Gastrocnemius medialis (tissue), 4 donors: ENCODE measurements at regions of chr12 and their contacts with region 1.

Region 1: DNA sequence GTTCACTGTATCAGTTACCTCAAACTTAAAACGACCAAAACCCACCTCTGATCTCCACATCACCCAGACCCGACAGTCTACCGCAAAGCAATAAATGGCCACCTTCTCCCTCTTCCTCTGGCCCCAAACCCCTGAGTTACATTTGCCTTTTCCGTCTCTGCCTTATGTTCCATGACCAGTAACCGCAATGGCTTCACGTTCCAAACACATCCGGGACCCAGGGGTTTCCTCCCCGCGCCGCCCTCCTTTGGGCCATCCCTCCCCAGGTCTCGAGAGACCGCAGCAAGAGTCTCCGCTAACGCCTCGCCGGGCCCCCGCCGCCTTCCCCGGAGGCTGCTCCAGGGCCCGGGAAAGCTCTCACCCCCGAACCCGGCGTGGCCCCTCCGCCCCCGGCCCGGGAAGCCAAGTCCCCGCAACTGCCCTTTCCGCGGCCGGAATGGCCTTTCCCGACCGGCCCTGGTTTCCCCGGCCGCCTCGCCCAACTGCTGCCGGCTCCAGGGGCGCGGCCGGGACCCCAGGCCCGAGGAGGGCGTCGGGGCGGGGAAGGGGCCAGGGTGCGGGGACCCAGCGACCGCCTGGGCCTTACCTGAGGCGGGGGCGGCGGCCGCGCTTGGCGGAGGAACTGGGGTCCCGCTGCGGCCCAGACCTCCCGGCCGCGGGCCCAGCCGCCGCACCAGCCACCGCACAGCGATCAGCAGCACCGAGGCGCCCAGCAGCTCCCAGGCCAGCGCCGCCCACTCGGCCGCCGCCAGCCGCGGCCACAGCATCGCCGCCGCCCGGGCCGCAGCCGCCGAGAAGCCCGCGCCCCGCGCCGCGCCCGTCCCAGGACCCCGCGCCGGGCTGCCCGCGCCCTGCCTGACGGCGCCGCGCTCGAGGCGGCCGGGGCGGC is at the start of gene ANKLE2:
- DNase-seq: peak in 1 of 2 donors; percentile 28
- ATAC-seq: peak; percentile 73 to 80
- H3K4me3 ChIP-seq: peak within 1 kb of the TSS; percentile 86 to 98 (median 90)
- H3K27ac ChIP-seq: peak within 1 kb of the TSS; percentile 94 to 100 (median 99)
- H3K4me1 ChIP-seq: peaks cover 21 to 32% of the 10 kb centered on the region in 2 donors
- H3K27me3 ChIP-seq: no peaks in the 10 kb centered on the region
- CTCF ChIP-seq: no peak
- POLR2A ChIP-seq: peak in 1 of 2 donors; percentile 2
- total RNA-seq, gene ANKLE2: 29.6 to 44.9 (median 34.6) TPM

Region 2: DNA sequence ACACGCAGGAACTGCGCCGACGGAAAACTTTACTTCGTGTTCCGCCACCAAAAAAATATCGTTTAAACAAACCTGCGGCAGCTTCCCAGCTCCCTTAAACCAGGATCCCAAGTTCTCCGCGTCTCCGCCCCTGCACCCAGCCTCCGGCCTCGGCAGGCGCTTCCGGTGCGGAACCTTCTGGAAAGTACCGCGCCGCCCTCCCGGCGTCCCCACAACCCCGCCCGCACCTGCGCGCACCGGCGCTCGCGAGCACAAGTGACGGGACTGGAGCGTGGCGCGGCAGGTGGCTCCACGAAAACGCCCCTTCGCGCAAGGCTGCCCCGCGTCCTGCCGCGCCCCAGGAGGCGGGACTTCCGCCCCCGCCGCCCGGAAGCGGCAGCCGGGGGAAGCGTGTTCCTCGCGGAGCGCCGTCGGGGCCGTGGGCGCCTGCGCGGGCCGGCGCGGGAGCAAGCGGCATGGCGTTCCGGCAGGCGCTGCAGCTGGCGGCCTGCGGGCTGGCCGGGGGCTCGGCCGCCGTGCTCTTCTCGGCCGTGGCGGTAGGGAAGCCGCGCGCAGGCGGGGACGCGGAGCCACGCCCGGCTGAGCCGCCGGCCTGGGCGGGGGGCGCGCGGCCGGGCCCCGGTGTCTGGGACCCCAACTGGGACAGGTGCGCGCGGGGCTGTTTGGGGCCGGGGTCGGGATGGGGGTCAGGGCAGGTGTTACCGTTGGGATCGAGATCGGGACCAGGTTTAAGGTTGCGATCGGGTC is 50.7 kb before region 1 on chr12 and contains the start of gene PGAM5:
- in situ Hi-C with region 1: no loop called
- intact Hi-C with region 1: loop called (anchors 5 kb)
- DNase-seq: peak; percentile 68 to 85
- ATAC-seq: peak; percentile 91 to 93
- H3K4me3 ChIP-seq: peak within 1 kb of the TSS; percentile 74 to 99 (median 89)
- H3K27ac ChIP-seq: peak within 1 kb of the TSS; percentile 86 to 94 (median 90)
- H3K4me1 ChIP-seq: peaks cover 16 to 18% of the 10 kb centered on the region in 2 donors
- H3K27me3 ChIP-seq: no peaks in the 10 kb centered on the region
- CTCF ChIP-seq: peak in 1 of 5 experiments; percentile 7
- POLR2A ChIP-seq: peak; percentile 79 to 86
- total RNA-seq, gene PGAM5: 36.6 to 75.1 (median 62.8) TPM

Region 3: GRCh38 chr12:132734206-132734605 is 27.1 kb before region 1 on chr12:
- in situ Hi-C with region 1: no loop called
- intact Hi-C with region 1: no loop called
- DNase-seq: no peak
- ATAC-seq: no peak
- H3K4me3 ChIP-seq: no peak overlapping the region
- H3K27ac ChIP-seq: no peak overlapping the region
- H3K4me1 ChIP-seq: no peaks in the 10 kb centered on the region
- H3K27me3 ChIP-seq: no peaks in the 10 kb centered on the region
- CTCF ChIP-seq: no peak
- POLR2A ChIP-seq: no peak

Region 4: DNA sequence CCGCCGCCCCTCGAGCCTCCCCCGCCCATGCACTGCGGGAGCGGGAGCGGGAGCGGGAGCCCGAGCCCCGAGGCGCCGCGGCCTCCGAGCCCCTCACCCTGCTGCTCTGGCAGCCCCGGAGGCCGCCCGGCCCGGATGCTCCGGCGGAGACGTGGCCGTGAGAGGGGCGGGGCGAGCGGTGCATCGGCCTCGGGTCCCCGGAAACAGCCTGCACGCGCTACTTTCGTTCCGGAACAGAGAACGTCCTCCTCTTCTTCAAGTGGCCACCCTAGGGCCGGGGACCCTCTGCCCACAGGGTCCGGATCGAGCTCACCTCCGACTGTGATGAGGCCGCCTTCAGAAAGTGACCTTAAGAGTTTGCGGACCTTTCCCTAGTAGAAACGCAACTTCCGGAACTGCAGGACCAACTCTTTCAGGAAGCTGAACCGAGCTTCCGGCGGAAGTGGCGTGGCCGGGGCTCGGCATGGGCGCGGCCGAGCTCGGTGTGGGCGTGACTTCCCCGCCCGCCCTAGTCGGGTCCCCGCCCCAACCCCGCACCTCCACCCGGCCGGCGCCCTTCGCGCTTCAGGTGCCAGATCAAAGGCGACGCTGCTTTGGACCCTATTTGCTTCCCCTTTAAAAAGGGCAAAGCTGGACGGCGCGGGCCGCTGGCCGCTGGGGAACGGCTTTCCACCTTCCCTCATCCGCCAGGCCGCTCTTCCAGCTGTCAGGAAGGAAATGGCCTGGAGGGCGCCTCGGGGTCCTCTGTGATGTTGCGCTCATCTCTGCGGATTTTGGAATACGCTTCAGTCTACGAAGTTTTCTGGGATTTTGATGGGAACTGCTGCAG is 67.6 kb after region 1 on chr12 and contains the start of gene GOLGA3:
- in situ Hi-C with region 1: no loop called
- intact Hi-C with region 1: loop called (anchors 2 kb)
- DNase-seq: peak; percentile 85 to 88
- ATAC-seq: peak; percentile 97 to 98
- H3K4me3 ChIP-seq: peak within 1 kb of the TSS; percentile 78 to 87 (median 84)
- H3K27ac ChIP-seq: peak within 1 kb of the TSS; percentile 92 to 100 (median 97)
- H3K4me1 ChIP-seq: peaks cover 15 to 22% of the 10 kb centered on the region in 2 donors
- H3K27me3 ChIP-seq: no peaks in the 10 kb centered on the region
- CTCF ChIP-seq: peak in 1 of 5 experiments; percentile 20
- POLR2A ChIP-seq: peak; percentile 40 to 54
- total RNA-seq, gene GOLGA3: 30.0 to 50.0 (median 39.6) TPM